ENCODE measurements at regions of chr6 and their contacts with region 1.

Region 1: GRCh38 chr6:34341481-34341971 is 50.9 kb downstream of the NUDT3 start:
- DNase-seq: peak in 2 of 3 donors; percentile 28
- H3K4me3 ChIP-seq: no peak overlapping the region
- H3K4me3 Mint-ChIP-seq: no peak overlapping the region
- H3K27ac ChIP-seq: peak overlapping the region in 1 of 2 donors; percentile 39
- H3K27ac Mint-ChIP-seq: peak overlapping the region in 6 of 7 donors; percentile 0 to 76 (median 54)
- H3K4me1 ChIP-seq: peaks cover 42 to 56% of the 10 kb centered on the region in 2 donors
- H3K4me1 Mint-ChIP-seq: peaks cover 77% of the 10 kb centered on the region
- H3K27me3 ChIP-seq: no peaks in the 10 kb centered on the region
- H3K27me3 Mint-ChIP-seq: peaks cover 0 to 2% (median 0%) of the 10 kb centered on the region in 3 donors
- CTCF ChIP-seq: no peak

Region 2: GRCh38 chr6:34301408-34301807 is 40.1 kb before region 1 on chr6:
- intact Hi-C with region 1: loop called in 1 of 2 experiments (anchors 5 kb)
- DNase-seq: no peak
- H3K4me3 ChIP-seq: no peak overlapping the region
- H3K4me3 Mint-ChIP-seq: no peak overlapping the region
- H3K27ac ChIP-seq: peak overlapping the region; percentile 1 to 88
- H3K27ac Mint-ChIP-seq: peak overlapping the region; percentile 48 to 94 (median 73)
- H3K4me1 ChIP-seq: peaks cover 17 to 19% of the 10 kb centered on the region in 2 donors
- H3K4me1 Mint-ChIP-seq: peaks cover 30% of the 10 kb centered on the region
- H3K27me3 ChIP-seq: no peaks in the 10 kb centered on the region
- H3K27me3 Mint-ChIP-seq: no peaks in the 10 kb centered on the region
- CTCF ChIP-seq: no peak

Region 3: DNA sequence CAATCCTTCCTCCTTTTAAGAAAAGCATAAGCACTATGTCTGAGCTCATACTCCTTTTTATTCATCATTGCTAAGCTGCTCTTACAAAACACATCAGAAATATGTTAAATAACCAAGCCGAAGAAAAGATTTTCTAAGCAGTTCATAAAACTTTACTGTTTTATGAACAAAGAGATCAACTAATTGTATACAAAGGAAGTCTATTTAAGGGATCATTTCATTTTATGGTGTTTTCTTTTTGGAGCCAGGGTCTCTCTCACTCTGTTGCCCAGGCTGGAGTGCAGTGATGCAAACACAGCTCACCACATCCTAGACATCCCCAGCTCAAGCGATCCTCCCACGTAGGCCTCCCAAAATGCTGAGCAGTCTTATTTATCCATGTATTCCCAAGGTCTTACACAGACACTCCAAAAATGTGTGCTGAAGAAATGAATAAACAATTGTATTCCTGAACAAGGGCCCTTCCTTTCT is 41.7 kb after region 1 on chr6:
- intact Hi-C with region 1: loop called in 1 of 2 experiments (anchors 5 kb)
- DNase-seq: no peak
- H3K4me3 ChIP-seq: no peak overlapping the region
- H3K4me3 Mint-ChIP-seq: no peak overlapping the region
- H3K27ac ChIP-seq: peak overlapping the region in 1 of 2 donors; percentile 39
- H3K27ac Mint-ChIP-seq: peak overlapping the region; percentile 15 to 76 (median 38)
- H3K4me1 ChIP-seq: peaks cover 0 to 6% of the 10 kb centered on the region in 2 donors
- H3K4me1 Mint-ChIP-seq: peaks cover 41% of the 10 kb centered on the region
- H3K27me3 ChIP-seq: no peaks in the 10 kb centered on the region
- H3K27me3 Mint-ChIP-seq: no peaks in the 10 kb centered on the region
- CTCF ChIP-seq: no peak

Measured in CD14-positive monocyte (primary cell).